MCF 10A (cell line): ENCODE measurements at regions of chr9 and their contacts with region 1.

Region 1: GRCh38 chr9:71285191-71285656 is 163.8 kb upstream of the TRPM3 start:
- DNase-seq: peak; percentile 74
- H3K4me3 Mint-ChIP-seq: no peak overlapping the region
- H3K27ac Mint-ChIP-seq: no peak overlapping the region
- H3K4me1 Mint-ChIP-seq: peaks cover 5% of the 10 kb centered on the region
- H3K27me3 Mint-ChIP-seq: peaks cover 32% of the 10 kb centered on the region
- CTCF ChIP-seq: peak; percentile 78

Region 2: GRCh38 chr9:71295928-71296327 is 10.7 kb after region 1 on chr9:
- CTCF ChIA-PET with region 1: interaction called, 20 read pairs
- POLR2A ChIA-PET with region 1: no interaction called
- intact Hi-C with region 1: no loop called
- DNase-seq: no peak
- H3K4me3 Mint-ChIP-seq: no peak overlapping the region
- H3K27ac Mint-ChIP-seq: no peak overlapping the region
- H3K4me1 Mint-ChIP-seq: no peaks in the 10 kb centered on the region
- H3K27me3 Mint-ChIP-seq: peaks cover 38% of the 10 kb centered on the region
- CTCF ChIP-seq: no peak

Region 3: GRCh38 chr9:71446473-71447411 is 161.5 kb after region 1 on chr9:
- CTCF ChIA-PET with region 1: no interaction called
- POLR2A ChIA-PET with region 1: no interaction called
- intact Hi-C with region 1: loop called (anchors 10 kb)
- DNase-seq: peak; percentile 61
- H3K4me3 Mint-ChIP-seq: peak overlapping the region; percentile 67
- H3K27ac Mint-ChIP-seq: no peak overlapping the region
- H3K4me1 Mint-ChIP-seq: no peaks in the 10 kb centered on the region
- H3K27me3 Mint-ChIP-seq: peaks cover 44% of the 10 kb centered on the region
- CTCF ChIP-seq: no peak

Region 4: DNA sequence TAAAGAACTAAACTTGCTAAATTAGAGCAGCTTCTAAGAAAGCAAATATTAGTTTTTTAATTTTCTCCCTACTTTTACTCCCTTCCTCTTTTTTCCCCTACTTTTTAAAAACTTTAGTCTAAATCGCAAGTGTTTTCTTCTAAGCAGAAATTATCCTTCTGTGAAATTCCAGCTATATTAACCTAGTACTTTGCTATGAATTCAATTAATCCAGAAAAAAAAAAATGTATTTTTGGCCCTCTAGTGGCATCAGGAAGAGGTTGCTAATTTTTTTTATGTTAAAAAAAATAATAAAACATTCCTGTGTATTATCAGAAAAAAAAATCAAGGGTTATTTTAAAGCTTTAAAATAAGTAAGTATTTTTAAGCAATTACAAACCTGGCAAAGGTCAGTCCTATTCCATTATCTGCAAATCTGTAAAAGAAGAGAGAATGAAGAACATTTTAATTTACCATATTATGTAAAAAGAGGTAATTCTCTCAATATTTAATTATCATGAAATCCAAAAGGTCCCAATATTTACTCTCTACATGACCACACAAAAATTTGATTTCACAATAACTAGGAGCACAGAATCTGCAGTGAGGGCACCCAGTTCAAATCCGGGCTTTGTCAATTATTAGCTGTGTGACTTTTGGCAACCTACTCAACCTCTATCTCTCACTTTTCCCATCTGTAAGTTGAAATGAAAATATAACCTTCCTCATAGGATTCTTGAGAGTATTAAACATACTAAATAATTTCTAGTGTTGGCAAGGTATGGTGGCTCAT is 431.1 kb after region 1 on chr9:
- CTCF ChIA-PET with region 1: interaction called, 9 read pairs
- POLR2A ChIA-PET with region 1: no interaction called
- intact Hi-C with region 1: loop called (anchors 10 kb)
- DNase-seq: no peak
- H3K4me3 Mint-ChIP-seq: no peak overlapping the region
- H3K27ac Mint-ChIP-seq: peak overlapping the region; percentile 54
- H3K4me1 Mint-ChIP-seq: peaks cover 19% of the 10 kb centered on the region
- H3K27me3 Mint-ChIP-seq: no peaks in the 10 kb centered on the region
- CTCF ChIP-seq: peak; percentile 42

Region 5: GRCh38 chr9:71806901-71807307 is 521.7 kb after region 1 on chr9:
- CTCF ChIA-PET with region 1: interaction called, 34 read pairs
- POLR2A ChIA-PET with region 1: no interaction called
- intact Hi-C with region 1: no loop called
- DNase-seq: peak; percentile 79
- H3K4me3 Mint-ChIP-seq: no peak overlapping the region
- H3K27ac Mint-ChIP-seq: no peak overlapping the region
- H3K4me1 Mint-ChIP-seq: peaks cover 6% of the 10 kb centered on the region
- H3K27me3 Mint-ChIP-seq: no peaks in the 10 kb centered on the region
- CTCF ChIP-seq: peak; percentile 88

Region 6: DNA sequence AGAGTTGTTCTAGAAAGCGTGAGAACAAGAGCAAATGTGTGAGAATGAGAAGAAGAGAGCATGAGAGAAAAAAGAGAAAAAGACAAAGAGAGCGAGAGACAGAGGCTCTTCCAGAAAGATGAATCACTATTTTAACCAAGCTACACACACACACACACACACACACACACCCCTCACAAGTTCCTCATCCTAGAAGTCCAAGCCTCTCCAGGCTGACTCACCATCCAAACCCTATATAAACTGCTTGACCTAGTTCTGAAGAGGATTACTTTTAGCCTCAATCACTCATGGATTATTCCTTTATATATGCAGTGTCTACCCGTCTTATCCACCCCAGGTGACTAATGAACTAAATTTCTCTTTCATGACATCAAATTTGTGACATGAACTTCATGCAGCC is 737.6 kb after region 1 on chr9:
- CTCF ChIA-PET with region 1: interaction called, 13 read pairs
- POLR2A ChIA-PET with region 1: no interaction called
- intact Hi-C with region 1: loop called (anchors 1 kb)
- DNase-seq: peak; percentile 41
- H3K4me3 Mint-ChIP-seq: no peak overlapping the region
- H3K27ac Mint-ChIP-seq: no peak overlapping the region
- H3K4me1 Mint-ChIP-seq: peaks cover 16% of the 10 kb centered on the region
- H3K27me3 Mint-ChIP-seq: no peaks in the 10 kb centered on the region
- CTCF ChIP-seq: no peak